ENCODE measurements at regions of chr11 and their contacts with region 1.

Region 1: DNA sequence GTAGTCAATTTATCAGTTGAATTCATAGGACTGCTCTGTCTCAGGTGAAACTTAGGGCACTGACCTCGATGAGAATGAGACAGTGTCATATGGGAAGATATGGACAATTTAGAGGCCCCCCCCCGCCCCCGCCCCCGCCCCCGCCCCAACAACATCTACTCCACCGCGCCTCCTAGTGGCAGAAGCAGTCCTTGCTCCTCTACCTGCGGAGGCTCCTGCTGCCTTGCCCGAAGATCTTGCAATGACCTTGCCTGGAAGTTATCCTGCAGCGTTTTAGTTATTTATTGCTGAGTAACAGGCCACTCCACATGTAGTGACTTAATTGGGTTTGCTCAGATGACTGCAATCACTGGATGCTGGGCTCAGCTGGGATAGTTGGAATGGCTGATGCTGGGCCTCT is 15.2 kb downstream of the SERPINH1 start:
- DNase-seq: peak; percentile 62
- ATAC-seq: peak; percentile 38
- H3K4me3 Mint-ChIP-seq: no peak overlapping the region
- H3K27ac Mint-ChIP-seq: no peak overlapping the region
- H3K4me1 Mint-ChIP-seq: peaks cover 10% of the 10 kb centered on the region
- H3K27me3 Mint-ChIP-seq: no peaks in the 10 kb centered on the region
- CTCF ChIP-seq: peak; percentile 60

Region 2: GRCh38 chr11:75547580-75548058 is 29.6 kb before region 1 on chr11:
- CTCF ChIA-PET with region 1: interaction called, 10 read pairs
- POLR2A ChIA-PET with region 1: no interaction called
- intact Hi-C with region 1: no loop called
- DNase-seq: peak; percentile 66
- ATAC-seq: peak; percentile 73
- H3K4me3 Mint-ChIP-seq: no peak overlapping the region
- H3K27ac Mint-ChIP-seq: peak overlapping the region; percentile 23
- H3K4me1 Mint-ChIP-seq: peaks cover 4% of the 10 kb centered on the region
- H3K27me3 Mint-ChIP-seq: no peaks in the 10 kb centered on the region
- CTCF ChIP-seq: peak; percentile 93

Region 3: DNA sequence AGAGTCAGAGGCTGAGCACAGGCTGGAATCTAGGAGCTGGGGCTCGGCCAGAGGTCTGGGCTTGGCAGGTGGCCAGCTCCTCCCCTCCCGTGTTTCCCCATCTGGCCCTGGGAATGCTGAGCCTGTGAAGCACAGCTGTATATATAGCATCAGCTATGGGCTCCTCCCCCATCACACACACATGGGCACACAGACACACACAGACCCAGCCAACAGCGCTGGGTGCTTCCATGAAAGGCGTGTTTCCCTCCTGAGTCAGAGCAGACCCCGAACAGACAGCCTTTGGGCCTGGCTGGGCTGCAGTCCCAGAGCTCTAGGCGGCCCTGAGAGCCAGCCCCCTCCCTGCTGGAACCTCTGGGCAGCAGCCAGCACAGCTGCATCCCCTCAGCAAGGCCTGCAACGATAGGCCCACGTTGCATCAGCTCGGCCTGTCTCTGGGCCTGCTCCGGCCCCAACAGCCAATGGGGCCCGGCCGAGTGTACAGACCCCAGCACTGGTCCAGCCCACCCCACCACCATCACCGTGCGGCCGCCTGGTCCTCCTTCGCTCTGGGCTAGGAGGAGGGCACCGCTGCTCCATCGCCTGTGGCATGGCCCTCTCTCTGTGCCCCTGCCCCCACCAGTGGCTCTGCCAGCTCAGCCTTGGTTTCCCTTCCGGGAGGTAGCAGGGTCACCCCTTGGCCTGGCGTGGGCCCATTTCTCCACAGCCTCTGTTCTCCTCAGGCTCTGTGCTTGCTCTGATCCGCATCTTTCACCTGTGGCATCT is 22.8 kb before region 1 on chr11:
- CTCF ChIA-PET with region 1: interaction called, 10 read pairs
- POLR2A ChIA-PET with region 1: interaction called, 34 read pairs
- intact Hi-C with region 1: no loop called
- DNase-seq: no peak
- ATAC-seq: no peak
- H3K4me3 Mint-ChIP-seq: no peak overlapping the region
- H3K27ac Mint-ChIP-seq: no peak overlapping the region
- H3K4me1 Mint-ChIP-seq: peaks cover under 1% of the 10 kb centered on the region
- H3K27me3 Mint-ChIP-seq: no peaks in the 10 kb centered on the region
- CTCF ChIP-seq: no peak

Region 4: GRCh38 chr11:75562048-75562835 is 15.0 kb before region 1 on chr11 and contains the start of gene SERPINH1:
- CTCF ChIA-PET with region 1: interaction called, 22 read pairs
- POLR2A ChIA-PET with region 1: interaction called, 34 read pairs
- intact Hi-C with region 1: no loop called
- DNase-seq: peak; percentile 85
- ATAC-seq: peak; percentile 89
- H3K4me3 Mint-ChIP-seq: peak within 1 kb of the TSS; percentile 100
- H3K27ac Mint-ChIP-seq: peak within 1 kb of the TSS; percentile 99
- H3K4me1 Mint-ChIP-seq: peaks cover 32% of the 10 kb centered on the region
- H3K27me3 Mint-ChIP-seq: no peaks in the 10 kb centered on the region
- CTCF ChIP-seq: no peak
- total RNA-seq, gene SERPINH1: 15.7 to 17.7 TPM